OCI-LY7 (cell line): ENCODE measurements at regions of chr6 and their contacts with region 1.

Region 1: GRCh38 chr6:25534942-25535631 is 116.9 kb upstream of the SCGN start:
- DNase-seq: no peak
- H3K4me3 ChIP-seq: no peak overlapping the region
- H3K27ac ChIP-seq: no peak overlapping the region
- H3K4me1 ChIP-seq: no peaks in the 10 kb centered on the region
- CTCF ChIP-seq: no peak

Region 2: GRCh38 chr6:25449774-25450173 is 85.3 kb before region 1 on chr6:
- CTCF ChIA-PET with region 1: no interaction called
- POLR2A ChIA-PET with region 1: no interaction called
- intact Hi-C with region 1: no loop called
- DNase-seq: no peak
- H3K4me3 ChIP-seq: no peak overlapping the region
- H3K27ac ChIP-seq: no peak overlapping the region
- H3K4me1 ChIP-seq: peaks cover 35% of the 10 kb centered on the region
- CTCF ChIP-seq: no peak

Region 3: GRCh38 chr6:25524542-25524941 is 10.5 kb before region 1 on chr6:
- CTCF ChIA-PET with region 1: no interaction called
- POLR2A ChIA-PET with region 1: interaction called, 12 read pairs
- intact Hi-C with region 1: no loop called
- DNase-seq: no peak
- H3K4me3 ChIP-seq: no peak overlapping the region
- H3K27ac ChIP-seq: no peak overlapping the region
- H3K4me1 ChIP-seq: no peaks in the 10 kb centered on the region
- CTCF ChIP-seq: no peak